PC-9 (cell line): ENCODE measurements at regions of chr2 and their contacts with region 1.

Region 1: DNA sequence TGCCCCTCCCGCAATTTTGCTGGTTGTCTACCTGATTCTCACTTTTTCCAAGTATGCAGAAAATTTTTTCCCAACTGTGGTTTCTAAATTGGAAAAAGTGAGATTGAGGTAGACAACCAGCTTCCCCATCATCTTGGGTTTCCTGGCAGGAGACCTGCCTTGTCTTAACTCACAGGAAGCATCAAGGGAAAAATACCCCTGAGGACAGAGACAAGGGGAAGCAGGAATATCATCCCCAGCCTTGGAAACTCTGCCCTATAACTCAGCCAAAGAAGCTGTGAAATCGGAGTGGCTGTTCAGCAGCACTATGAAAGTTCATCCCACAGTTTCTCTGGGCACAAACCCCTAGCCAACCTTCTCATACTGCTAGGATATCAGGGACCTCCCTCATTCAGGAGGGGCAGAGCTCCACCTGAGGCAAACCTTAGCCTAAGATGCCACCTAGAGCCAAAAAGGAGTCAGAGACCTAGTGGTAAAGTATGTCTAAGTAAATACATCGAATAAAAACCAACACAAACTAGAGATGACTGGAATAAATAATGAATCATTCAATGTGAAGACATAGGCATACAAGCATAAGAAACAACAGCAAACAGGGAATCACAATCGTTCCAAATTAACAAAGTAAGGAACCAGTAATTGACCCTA is 68.1 kb downstream of the ZSWIM2 start:
- DNase-seq: peak in 1 of 2 experiments; percentile 53
- H3K4me3 ChIP-seq: no peak overlapping the region
- H3K27ac ChIP-seq: no peak overlapping the region
- H3K4me1 ChIP-seq: no peaks in the 10 kb centered on the region
- H3K27me3 ChIP-seq: no peaks in the 10 kb centered on the region
- CTCF ChIP-seq: peak; percentile 60

Region 2: DNA sequence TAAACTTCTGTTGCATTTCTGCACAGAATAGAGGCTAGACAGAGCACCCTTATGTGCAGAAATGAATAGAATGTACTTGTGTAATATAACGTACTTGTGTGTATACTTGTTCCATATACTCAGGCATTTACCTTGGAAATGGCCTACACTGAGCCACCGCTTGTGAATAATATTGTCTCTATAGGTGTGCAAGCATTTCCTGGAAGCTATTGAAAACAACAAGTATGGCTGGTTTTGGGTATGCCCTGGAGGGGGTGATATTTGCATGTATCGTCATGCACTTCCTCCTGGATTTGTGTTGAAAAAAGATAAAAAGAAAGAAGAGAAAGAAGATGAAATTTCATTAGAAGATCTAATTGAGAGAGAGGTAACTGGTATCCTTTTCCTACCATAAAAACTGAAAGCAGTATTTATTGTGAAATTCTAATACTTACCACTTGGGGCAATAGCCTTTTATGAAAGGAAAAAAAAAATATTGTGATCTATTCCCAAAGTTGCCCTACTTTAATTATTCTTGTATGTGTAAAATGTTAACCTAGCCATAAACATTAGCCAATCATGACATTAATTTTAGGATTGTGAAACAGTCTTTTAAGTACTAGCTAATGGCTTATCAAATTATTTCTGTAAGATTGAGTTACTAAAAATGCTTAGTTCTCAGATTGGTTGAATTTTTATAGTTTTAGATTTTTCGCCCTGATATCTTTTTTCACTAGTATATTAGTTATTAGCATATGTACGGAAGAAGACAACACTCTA is 276.8 kb before region 1 on chr2:
- CTCF ChIA-PET with region 1: no interaction called
- POLR2A ChIA-PET with region 1: no interaction called
- intact Hi-C with region 1: loop called (anchors 1 kb)
- DNase-seq: no peak
- H3K4me3 ChIP-seq: no peak overlapping the region
- H3K27ac ChIP-seq: no peak overlapping the region
- H3K4me1 ChIP-seq: no peaks in the 10 kb centered on the region
- H3K27me3 ChIP-seq: no peaks in the 10 kb centered on the region
- CTCF ChIP-seq: peak; percentile 75

Region 3: GRCh38 chr2:186641807-186642321 is 139.0 kb before region 1 on chr2:
- CTCF ChIA-PET with region 1: interaction called, 5 read pairs
- POLR2A ChIA-PET with region 1: no interaction called
- intact Hi-C with region 1: loop called (anchors 2 kb)
- DNase-seq: peak; percentile 38 to 66
- H3K4me3 ChIP-seq: no peak overlapping the region
- H3K27ac ChIP-seq: 0 out of 2 replicates have a peak overlapping the region, but pooled peaks have one; percentile 22
- H3K4me1 ChIP-seq: no peaks in the 10 kb centered on the region
- H3K27me3 ChIP-seq: no peaks in the 10 kb centered on the region
- CTCF ChIP-seq: peak; percentile 64

Region 4: GRCh38 chr2:186806591-186806990 is 25.8 kb after region 1 on chr2:
- CTCF ChIA-PET with region 1: no interaction called
- POLR2A ChIA-PET with region 1: no interaction called
- intact Hi-C with region 1: no loop called
- DNase-seq: no peak
- H3K4me3 ChIP-seq: no peak overlapping the region
- H3K27ac ChIP-seq: no peak overlapping the region
- H3K4me1 ChIP-seq: no peaks in the 10 kb centered on the region
- H3K27me3 ChIP-seq: no peaks in the 10 kb centered on the region
- CTCF ChIP-seq: no peak